A673 (cell line): ENCODE measurements at regions of chr12 and their contacts with region 1.

Region 1: GRCh38 chr12:4526923-4527546 is 11.7 kb upstream of the RAD51AP1 start:
- DNase-seq: peak; percentile 17
- H3K4me3 ChIP-seq: no peak overlapping the region
- H3K27ac ChIP-seq: no peak overlapping the region
- H3K4me1 ChIP-seq: no peaks in the 10 kb centered on the region
- H3K27me3 ChIP-seq: no peaks in the 10 kb centered on the region
- CTCF ChIP-seq: peak; percentile 63

Region 2: GRCh38 chr12:4307593-4308333 is 219.3 kb before region 1 on chr12:
- CTCF ChIA-PET with region 1: no interaction called
- POLR2A ChIA-PET with region 1: no interaction called
- intact Hi-C with region 1: loop called (anchors 5 kb)
- DNase-seq: peak; percentile 75
- H3K4me3 ChIP-seq: no peak overlapping the region
- H3K27ac ChIP-seq: no peak overlapping the region
- H3K4me1 ChIP-seq: no peaks in the 10 kb centered on the region
- H3K27me3 ChIP-seq: peaks cover 36% of the 10 kb centered on the region
- CTCF ChIP-seq: peak; percentile 63

Region 3: DNA sequence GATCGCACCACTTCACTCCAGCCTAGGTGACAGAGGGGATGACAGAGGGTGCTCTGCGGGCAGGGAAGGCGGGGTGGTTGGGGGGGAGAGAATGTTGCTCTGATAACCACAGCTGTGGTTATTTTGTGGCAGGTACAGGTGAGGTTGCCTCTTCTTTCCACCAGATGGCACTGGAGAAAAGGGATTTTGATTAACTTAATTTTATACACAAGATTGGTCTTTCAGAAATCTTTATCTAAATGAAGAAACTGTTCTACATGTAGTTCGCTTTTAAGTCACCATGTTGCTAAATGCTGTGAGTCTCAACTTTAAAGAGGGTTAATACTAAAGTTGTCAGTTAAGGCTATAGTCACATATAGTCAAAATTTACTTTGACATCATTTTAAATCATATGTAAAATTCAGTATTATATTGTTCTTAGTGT is 173.2 kb before region 1 on chr12:
- CTCF ChIA-PET with region 1: no interaction called
- POLR2A ChIA-PET with region 1: no interaction called
- intact Hi-C with region 1: loop called (anchors 2 kb)
- DNase-seq: peak; percentile 24
- H3K4me3 ChIP-seq: no peak overlapping the region
- H3K27ac ChIP-seq: no peak overlapping the region
- H3K4me1 ChIP-seq: no peaks in the 10 kb centered on the region
- H3K27me3 ChIP-seq: no peaks in the 10 kb centered on the region
- CTCF ChIP-seq: peak; percentile 49

Region 4: GRCh38 chr12:4421590-4422031 is 105.4 kb before region 1 on chr12:
- CTCF ChIA-PET with region 1: interaction called, 4 read pairs
- POLR2A ChIA-PET with region 1: interaction called, 4 read pairs
- intact Hi-C with region 1: loop called (anchors 1 kb)
- DNase-seq: peak; percentile 59
- H3K4me3 ChIP-seq: no peak overlapping the region
- H3K27ac ChIP-seq: no peak overlapping the region
- H3K4me1 ChIP-seq: no peaks in the 10 kb centered on the region
- H3K27me3 ChIP-seq: peaks cover 24% of the 10 kb centered on the region
- CTCF ChIP-seq: peak; percentile 68